ENCODE measurements at regions of chrX and their contacts with region 1.

Region 1: DNA sequence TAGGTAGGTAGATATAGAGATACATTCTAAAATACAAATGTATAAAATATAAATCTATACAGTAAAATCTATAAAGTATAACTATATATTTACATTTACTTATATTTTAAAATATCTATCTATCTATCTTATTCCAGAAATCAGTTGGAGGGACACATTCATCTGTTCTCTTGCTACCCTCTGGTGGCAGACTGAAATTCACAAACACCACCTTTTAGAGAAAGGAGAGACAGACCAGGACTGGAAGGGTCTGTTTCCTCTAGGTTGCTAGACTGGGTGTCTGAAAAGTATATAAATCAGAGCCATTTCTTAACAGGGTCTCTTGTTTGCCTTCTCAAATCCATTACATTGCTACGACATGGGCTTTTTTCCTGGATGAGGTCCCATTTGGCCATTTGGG is 343.0 kb downstream of the OPHN1 start:
- DNase-seq: no peak
- H3K4me3 ChIP-seq: no peak overlapping the region
- H3K4me3 Mint-ChIP-seq: no peak overlapping the region
- H3K27ac Mint-ChIP-seq: no peak overlapping the region
- H3K4me1 ChIP-seq: no peaks in the 10 kb centered on the region
- H3K4me1 Mint-ChIP-seq: no peaks in the 10 kb centered on the region
- H3K27me3 ChIP-seq: no peaks in the 10 kb centered on the region
- H3K27me3 Mint-ChIP-seq: no peaks in the 10 kb centered on the region
- CTCF ChIP-seq: no peak

Region 2: GRCh38 chrX:67684136-67684535 is 406.1 kb before region 1 on chrX:
- CTCF ChIA-PET with region 1: no interaction called
- POLR2A ChIA-PET with region 1: no interaction called
- intact Hi-C with region 1: no loop called
- DNase-seq: no peak
- H3K4me3 ChIP-seq: no peak overlapping the region
- H3K4me3 Mint-ChIP-seq: no peak overlapping the region
- H3K27ac Mint-ChIP-seq: no peak overlapping the region
- H3K4me1 ChIP-seq: no peaks in the 10 kb centered on the region
- H3K4me1 Mint-ChIP-seq: no peaks in the 10 kb centered on the region
- H3K27me3 ChIP-seq: no peaks in the 10 kb centered on the region
- H3K27me3 Mint-ChIP-seq: no peaks in the 10 kb centered on the region
- CTCF ChIP-seq: no peak

Region 3: GRCh38 chrX:67961516-67961915 is 128.8 kb before region 1 on chrX:
- CTCF ChIA-PET with region 1: no interaction called
- POLR2A ChIA-PET with region 1: no interaction called
- intact Hi-C with region 1: no loop called
- DNase-seq: no peak
- H3K4me3 ChIP-seq: no peak overlapping the region
- H3K4me3 Mint-ChIP-seq: no peak overlapping the region
- H3K27ac Mint-ChIP-seq: no peak overlapping the region
- H3K4me1 ChIP-seq: no peaks in the 10 kb centered on the region
- H3K4me1 Mint-ChIP-seq: no peaks in the 10 kb centered on the region
- H3K27me3 ChIP-seq: no peaks in the 10 kb centered on the region
- H3K27me3 Mint-ChIP-seq: no peaks in the 10 kb centered on the region
- CTCF ChIP-seq: no peak

Region 4: GRCh38 chrX:68018681-68019111 is 71.6 kb before region 1 on chrX:
- CTCF ChIA-PET with region 1: no interaction called
- POLR2A ChIA-PET with region 1: no interaction called
- intact Hi-C with region 1: loop called (anchors 1 kb)
- DNase-seq: peak; percentile 21 to 32
- H3K4me3 ChIP-seq: no peak overlapping the region
- H3K4me3 Mint-ChIP-seq: no peak overlapping the region
- H3K27ac Mint-ChIP-seq: no peak overlapping the region
- H3K4me1 ChIP-seq: no peaks in the 10 kb centered on the region
- H3K4me1 Mint-ChIP-seq: no peaks in the 10 kb centered on the region
- H3K27me3 ChIP-seq: no peaks in the 10 kb centered on the region
- H3K27me3 Mint-ChIP-seq: no peaks in the 10 kb centered on the region
- CTCF ChIP-seq: no peak

Region 5: DNA sequence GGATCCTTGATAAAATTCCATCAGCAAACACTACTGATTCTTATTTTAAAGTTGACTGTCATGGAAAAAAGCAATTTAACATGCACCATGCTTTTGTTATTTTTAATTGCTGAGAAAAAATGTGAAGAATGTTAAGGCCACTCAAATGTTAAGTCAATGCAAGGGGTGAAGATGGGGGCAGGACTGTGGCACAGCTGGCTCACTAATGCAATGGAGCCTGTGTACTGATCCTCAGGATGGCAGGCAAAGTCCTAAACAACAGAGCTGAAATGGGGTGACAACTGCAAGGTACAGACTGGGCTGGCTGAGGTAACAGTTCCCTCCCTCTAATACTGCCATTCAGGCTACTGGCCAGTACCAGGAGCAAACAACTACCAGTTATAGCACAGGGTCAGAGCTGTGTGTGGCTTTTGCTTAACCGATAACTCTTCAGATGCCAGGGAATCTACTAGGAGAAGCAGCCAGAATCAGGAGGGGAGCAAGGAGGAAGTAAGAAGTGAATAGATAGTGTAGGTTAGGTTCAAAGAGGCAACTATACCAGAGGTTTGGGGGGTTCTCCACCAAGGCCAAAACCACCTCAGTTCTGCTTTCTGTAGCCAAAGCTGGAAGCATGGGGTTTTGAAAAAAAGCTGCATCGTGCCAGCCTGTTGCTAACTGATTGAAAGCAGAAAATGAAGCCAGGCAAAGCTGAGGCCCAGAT is 29.6 kb before region 1 on chrX:
- CTCF ChIA-PET with region 1: no interaction called
- POLR2A ChIA-PET with region 1: no interaction called
- intact Hi-C with region 1: no loop called
- DNase-seq: no peak
- H3K4me3 ChIP-seq: no peak overlapping the region
- H3K4me3 Mint-ChIP-seq: no peak overlapping the region
- H3K27ac Mint-ChIP-seq: no peak overlapping the region
- H3K4me1 ChIP-seq: no peaks in the 10 kb centered on the region
- H3K4me1 Mint-ChIP-seq: no peaks in the 10 kb centered on the region
- H3K27me3 ChIP-seq: no peaks in the 10 kb centered on the region
- H3K27me3 Mint-ChIP-seq: no peaks in the 10 kb centered on the region
- CTCF ChIP-seq: no peak

Measured in Caco-2 (cell line).